Activated CD4-positive, alpha-beta T cell treated with anti-CD3 and anti-CD28 coated beads for 36 hours (primary cell): ENCODE measurements at regions of chr2 and their contacts with region 1.

Region 1: GRCh38 chr2:64330281-64331113 is 123.5 kb upstream of the LGALSL start:
- DNase-seq: peak; percentile 87
- ATAC-seq: no peak
- H3K4me3 Mint-ChIP-seq: peak overlapping the region; percentile 8
- H3K27ac Mint-ChIP-seq: no peak overlapping the region
- H3K4me1 Mint-ChIP-seq: peaks cover 48% of the 10 kb centered on the region
- H3K27me3 Mint-ChIP-seq: no peaks in the 10 kb centered on the region

Region 2: GRCh38 chr2:64045938-64046337 is 284.6 kb before region 1 on chr2:
- CTCF ChIA-PET with region 1: interaction called, 172 read pairs
- POLR2A ChIA-PET with region 1: interaction called, 5 read pairs
- intact Hi-C with region 1: loop called (anchors 1 kb)
- DNase-seq: no peak
- ATAC-seq: no peak
- H3K4me3 Mint-ChIP-seq: no peak overlapping the region
- H3K27ac Mint-ChIP-seq: no peak overlapping the region
- H3K4me1 Mint-ChIP-seq: peaks cover 10% of the 10 kb centered on the region
- H3K27me3 Mint-ChIP-seq: no peaks in the 10 kb centered on the region

Region 3: DNA sequence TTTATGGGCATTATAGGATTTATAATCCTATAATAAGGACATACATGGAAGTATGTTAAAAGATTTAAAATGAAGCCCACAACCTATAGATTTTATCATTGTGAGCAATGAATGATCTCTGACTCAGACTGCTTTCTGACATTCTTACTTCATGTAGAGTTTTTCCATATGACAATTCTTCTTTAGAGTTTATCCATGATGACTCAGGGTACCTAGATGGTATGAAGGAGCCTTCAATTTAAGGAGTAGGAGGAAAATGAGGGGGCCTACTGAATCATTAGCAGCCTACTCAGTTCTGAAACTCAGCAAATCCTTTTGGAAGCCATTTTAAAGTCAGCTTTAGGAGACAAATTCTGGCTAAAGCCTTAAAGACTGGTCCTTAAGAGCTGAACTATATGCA is 196.7 kb before region 1 on chr2:
- CTCF ChIA-PET with region 1: interaction called, 9 read pairs
- POLR2A ChIA-PET with region 1: interaction called, 4 read pairs
- intact Hi-C with region 1: loop called in 1 of 2 experiments (anchors 1 kb)
- DNase-seq: no peak
- ATAC-seq: peak; percentile 71
- H3K4me3 Mint-ChIP-seq: peak overlapping the region; percentile 11
- H3K27ac Mint-ChIP-seq: peak overlapping the region; percentile 72
- H3K4me1 Mint-ChIP-seq: peaks cover 87% of the 10 kb centered on the region
- H3K27me3 Mint-ChIP-seq: no peaks in the 10 kb centered on the region

Region 4: GRCh38 chr2:64228126-64228678 is 102.3 kb before region 1 on chr2:
- CTCF ChIA-PET with region 1: interaction called, 19 read pairs
- POLR2A ChIA-PET with region 1: interaction called, 5 read pairs
- intact Hi-C with region 1: loop called in 1 of 2 experiments (anchors 5 kb)
- DNase-seq: peak; percentile 80
- ATAC-seq: peak; percentile 83
- H3K4me3 Mint-ChIP-seq: peak overlapping the region; percentile 72
- H3K27ac Mint-ChIP-seq: peak overlapping the region; percentile 91
- H3K4me1 Mint-ChIP-seq: peaks cover 28% of the 10 kb centered on the region
- H3K27me3 Mint-ChIP-seq: peaks cover 2% of the 10 kb centered on the region

Region 5: DNA sequence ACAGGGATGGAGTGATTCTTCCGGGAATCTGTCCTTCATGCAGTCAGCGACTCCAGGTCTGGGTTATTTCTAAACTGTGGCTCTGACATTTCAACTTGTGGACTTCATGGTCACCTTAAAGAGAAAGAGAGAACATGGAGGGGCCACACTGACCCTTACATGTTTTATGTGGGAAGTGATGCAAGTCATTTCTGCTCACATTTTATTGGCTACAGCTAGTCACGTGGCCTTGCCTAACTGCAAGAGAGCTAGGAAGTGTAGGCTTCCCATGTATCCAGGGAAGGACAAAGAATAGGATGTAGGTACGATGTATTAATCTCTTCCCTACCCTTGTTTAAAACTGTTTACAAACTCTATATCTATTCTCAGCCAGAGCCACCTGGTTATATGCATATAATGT is 163.3 kb after region 1 on chr2:
- CTCF ChIA-PET with region 1: interaction called, 191 read pairs
- POLR2A ChIA-PET with region 1: no interaction called
- intact Hi-C with region 1: loop called (anchors 1 kb)
- DNase-seq: no peak
- ATAC-seq: no peak
- H3K4me3 Mint-ChIP-seq: no peak overlapping the region
- H3K27ac Mint-ChIP-seq: no peak overlapping the region
- H3K4me1 Mint-ChIP-seq: peaks cover 2% of the 10 kb centered on the region
- H3K27me3 Mint-ChIP-seq: peaks cover 2% of the 10 kb centered on the region

Region 6: GRCh38 chr2:64750817-64751285 is 420.4 kb after region 1 on chr2:
- CTCF ChIA-PET with region 1: interaction called, 3 read pairs
- POLR2A ChIA-PET with region 1: no interaction called
- intact Hi-C with region 1: loop called in 1 of 2 experiments (anchors 5 kb)
- DNase-seq: peak; percentile 99
- ATAC-seq: peak; percentile 90
- H3K4me3 Mint-ChIP-seq: peak overlapping the region; percentile 92
- H3K27ac Mint-ChIP-seq: peak overlapping the region; percentile 92
- H3K4me1 Mint-ChIP-seq: peaks cover 24% of the 10 kb centered on the region
- H3K27me3 Mint-ChIP-seq: no peaks in the 10 kb centered on the region